Sciatic nerve (tissue), 2 donors: ENCODE measurements at regions of chr11 and their contacts with region 1.

Region 1: GRCh38 chr11:76799066-76799804 is 16.1 kb downstream of the TSKU start:
- DNase-seq: peak; percentile 93
- ATAC-seq: peak; percentile 83

Region 2: DNA sequence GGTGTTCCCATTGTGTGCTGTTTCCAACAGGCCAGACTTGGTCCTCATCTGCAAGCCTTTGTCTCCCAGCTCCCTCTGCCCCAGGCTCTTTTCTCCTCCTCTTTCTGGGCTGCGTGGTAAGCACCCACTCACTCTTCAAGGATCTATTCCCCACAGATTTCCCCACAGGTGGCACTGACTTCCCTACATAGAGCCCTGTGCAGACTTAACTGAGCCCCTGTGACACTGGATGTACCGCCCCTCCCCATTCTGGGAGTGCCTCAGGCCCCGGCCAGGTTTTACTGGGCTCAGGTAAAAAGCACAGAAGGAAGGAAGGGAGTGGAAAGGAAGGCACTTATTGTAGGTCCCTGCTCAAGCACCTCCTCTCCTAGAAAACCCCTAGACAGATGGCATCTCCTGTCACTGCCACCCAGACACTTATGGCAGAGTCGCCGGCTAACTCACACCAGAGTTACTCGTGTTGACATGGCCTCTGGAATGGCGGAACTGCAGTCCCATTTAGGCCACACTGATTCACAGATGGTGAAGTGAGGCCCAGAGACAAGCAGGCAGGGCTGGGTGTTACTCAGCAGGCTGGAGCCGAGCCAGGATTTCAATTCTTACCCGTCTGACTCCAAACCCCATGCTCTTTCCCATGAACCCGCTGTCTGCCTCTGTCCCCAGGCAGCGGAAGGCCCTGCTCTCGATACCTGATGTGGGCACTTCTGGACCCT is 175.9 kb before region 1 on chr11:
- intact Hi-C with region 1: no loop called
- DNase-seq: no peak
- ATAC-seq: no peak

Region 3: DNA sequence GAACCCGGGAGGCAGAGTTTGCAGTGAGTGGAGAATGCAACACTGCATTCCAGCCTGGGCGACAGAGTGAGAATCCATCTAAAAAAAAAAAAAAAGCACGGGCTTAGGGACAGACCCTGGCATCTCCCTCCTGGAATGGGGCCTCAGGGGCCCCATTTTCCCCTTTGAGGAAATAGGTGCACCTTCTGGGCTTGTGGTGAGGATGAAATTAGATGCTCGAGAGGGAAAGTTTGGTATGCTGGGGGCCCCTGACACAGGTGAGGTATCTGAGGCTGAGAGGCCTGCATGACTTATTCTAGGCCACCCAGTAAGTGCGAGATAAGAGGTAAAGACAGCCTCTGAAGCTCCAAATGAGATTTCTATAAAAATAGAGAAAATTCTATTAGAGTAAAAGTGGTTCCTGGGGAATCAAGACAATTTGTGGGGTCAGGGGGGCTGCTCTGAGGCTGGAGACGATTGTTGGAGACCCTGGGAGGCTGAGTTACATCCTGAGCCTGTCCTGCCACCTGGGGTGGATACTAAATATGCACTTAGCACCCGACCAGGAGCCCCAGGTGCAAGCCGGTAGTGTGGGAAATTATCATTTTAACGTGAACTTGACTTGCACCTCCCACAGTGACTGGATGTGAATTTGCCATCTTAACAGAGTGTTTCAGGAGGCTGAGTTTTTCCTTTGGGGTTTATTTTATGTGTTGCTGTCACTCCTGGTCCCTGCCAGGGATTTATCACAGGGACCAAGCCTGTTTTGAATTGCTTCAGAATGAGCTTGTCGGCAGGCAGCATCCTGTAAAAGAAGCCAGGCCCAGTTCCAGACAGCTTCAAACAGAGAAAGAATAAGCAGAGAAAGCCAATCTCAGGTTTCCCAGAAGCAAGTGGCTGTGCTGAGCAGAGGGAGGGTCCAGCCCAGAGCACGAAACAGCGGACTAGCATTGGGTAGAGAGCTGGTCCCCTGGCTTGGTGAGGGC is 64.5 kb before region 1 on chr11:
- intact Hi-C with region 1: loop called (anchors 1 kb)
- DNase-seq: no peak
- ATAC-seq: peak; percentile 8

Region 4: DNA sequence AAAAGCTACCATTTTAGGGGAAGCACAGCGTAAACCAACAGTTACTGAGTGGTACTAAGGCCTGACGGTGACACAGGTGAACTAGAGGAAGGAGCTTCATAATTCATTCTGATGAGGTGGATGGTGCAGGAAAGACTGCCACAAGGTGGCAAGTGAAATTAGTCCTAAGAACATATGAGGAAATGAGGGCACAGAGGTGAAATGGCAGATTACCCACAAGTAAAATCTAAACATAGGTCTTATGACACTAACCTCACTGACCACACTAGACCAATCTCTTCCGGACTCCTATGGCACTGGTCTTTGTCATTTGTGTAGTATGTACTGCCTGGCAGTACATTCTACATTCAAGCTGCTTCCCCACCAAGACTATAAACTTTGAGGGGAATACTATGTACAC is 1598.2 kb after region 1 on chr11:
- intact Hi-C with region 1: loop called (anchors 5 kb)
- DNase-seq: no peak
- ATAC-seq: no peak